SK-MEL-5 (cell line): ENCODE measurements at regions of chr9 and their contacts with region 1.

Region 1: DNA sequence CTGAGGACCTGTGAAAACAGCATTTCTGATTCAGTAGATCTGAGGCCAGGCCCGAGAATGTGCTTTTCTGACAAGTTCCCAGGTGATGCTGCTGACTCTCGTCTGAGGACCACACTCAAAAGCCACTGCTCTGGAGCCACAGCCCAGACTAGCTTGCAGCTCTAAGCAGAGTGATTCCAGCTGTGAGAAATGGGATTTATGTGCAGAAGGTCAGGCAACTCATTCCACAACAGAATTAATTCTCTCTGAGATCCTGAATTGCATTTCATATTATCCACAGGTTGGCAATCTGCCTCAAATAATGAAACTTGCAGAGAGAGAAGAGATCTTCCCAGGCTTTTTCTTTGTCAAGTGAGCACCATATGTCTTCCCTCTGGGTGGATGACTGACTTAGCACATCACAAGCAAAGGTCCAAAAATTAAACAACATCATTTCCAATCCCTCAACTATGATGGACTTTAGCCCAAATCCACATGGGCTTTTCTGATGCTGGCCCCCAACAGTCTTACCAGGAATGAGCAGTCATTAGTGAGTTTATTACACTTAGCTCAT is 140.2 kb downstream of the ALDH1A1 start:
- DNase-seq: no peak

Region 2: DNA sequence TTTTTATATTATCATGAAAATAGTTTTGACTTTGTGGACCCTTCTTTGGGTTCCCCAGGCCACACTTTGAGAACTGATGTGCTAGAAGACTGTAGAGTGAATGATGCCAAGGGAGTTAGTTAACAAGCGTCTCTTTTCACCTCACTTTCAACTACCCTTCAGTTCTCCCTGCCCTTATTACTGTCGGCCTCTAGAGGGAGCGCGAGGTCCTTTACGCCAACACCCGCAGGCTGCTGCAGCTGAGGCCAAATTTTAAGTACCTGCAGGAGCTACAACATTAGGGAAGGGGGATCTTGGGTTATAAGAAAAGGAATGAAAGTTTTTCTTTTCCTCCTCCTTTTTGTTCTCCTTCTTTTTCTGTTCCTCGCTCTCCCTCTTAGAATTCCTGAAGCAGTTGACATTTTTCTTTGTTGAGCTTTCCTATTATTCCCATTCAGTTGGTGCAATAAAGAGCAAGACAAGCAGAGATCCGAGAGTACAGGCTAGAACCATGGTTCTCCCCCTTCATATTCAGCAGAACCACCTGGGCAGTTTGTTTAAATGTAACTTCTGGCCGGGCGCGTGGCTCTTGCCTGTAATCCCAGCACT is 531.6 kb before region 1 on chr9:
- in situ Hi-C with region 1: loop called (anchors 10 kb)
- DNase-seq: peak; percentile 78

Region 3: DNA sequence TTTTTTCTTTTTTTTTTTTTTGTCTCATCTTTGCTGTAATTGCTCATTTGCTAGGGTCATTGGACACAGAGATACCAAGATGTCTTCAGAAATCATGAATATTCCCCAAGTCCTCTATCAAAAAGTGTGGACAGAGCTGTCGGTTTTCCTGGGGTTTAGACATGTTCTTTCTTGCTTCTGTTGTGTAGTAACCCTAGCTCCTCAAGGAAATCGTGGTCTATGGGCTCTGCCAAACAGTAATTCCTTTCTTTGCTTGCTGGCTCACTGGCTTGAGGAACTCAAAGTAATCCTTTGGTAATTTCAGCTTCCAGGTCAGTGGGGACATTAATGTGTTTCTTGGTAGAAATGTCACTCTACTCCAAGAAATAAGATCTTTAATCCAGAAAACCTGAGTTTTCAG is 189.5 kb before region 1 on chr9:
- in situ Hi-C with region 1: no loop called
- DNase-seq: peak; percentile 32

Region 4: GRCh38 chr9:72937545-72937944 is 124.9 kb after region 1 on chr9:
- in situ Hi-C with region 1: no loop called
- DNase-seq: peak; percentile 92